Activated CD4-positive, alpha-beta T cell treated with anti-CD3 and anti-CD28 coated beads for 36 hours (primary cell): ENCODE measurements at regions of chr17 and their contacts with region 1.

Region 1: DNA sequence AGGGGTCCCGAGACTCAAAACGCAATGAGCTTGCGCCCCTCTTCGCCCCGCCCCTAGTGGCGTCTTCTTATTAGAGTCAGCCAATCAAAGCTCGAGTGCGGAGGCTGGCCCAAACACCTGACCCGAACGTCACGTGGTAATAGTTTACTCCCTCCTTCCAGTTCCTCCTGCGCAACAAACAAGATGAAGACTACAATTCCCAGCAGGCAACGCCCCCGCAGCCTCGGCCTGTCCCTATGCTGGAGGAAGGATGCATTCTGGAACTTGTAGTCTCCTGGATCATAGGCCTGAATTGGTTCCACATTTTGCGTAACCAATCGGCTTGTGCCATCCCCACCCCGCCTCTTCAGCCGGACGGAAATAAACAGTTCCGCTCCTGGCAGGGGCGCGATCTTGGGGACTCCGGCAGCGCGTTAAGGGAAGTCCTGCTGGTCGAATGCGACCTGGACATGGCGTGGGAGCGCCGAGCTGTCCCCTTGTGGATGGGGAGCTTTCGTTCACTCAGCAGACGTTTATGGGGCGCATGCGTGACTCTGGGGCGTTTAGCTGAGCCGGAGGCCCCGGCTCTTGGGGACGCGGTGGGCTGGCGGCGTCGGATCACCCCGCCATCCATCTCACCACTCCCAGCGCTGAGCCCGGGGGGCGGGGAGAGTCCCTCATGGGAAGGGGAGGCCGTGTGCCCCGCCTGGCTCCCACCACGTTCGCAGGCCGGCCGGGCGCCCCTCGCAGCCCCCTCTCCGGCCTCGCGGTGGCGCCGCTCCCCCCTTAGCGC is at the start of gene WBP2:
- DNase-seq: peak; percentile 99
- ATAC-seq: peak; percentile 95
- H3K4me3 Mint-ChIP-seq: no peak within 1 kb of the TSS
- H3K27ac Mint-ChIP-seq: peak within 1 kb of the TSS; percentile 86
- H3K4me1 Mint-ChIP-seq: peaks cover 37% of the 10 kb centered on the region
- H3K27me3 Mint-ChIP-seq: no peaks in the 10 kb centered on the region
- total RNA-seq, gene WBP2: 68.7 to 74.1 TPM

Region 2: DNA sequence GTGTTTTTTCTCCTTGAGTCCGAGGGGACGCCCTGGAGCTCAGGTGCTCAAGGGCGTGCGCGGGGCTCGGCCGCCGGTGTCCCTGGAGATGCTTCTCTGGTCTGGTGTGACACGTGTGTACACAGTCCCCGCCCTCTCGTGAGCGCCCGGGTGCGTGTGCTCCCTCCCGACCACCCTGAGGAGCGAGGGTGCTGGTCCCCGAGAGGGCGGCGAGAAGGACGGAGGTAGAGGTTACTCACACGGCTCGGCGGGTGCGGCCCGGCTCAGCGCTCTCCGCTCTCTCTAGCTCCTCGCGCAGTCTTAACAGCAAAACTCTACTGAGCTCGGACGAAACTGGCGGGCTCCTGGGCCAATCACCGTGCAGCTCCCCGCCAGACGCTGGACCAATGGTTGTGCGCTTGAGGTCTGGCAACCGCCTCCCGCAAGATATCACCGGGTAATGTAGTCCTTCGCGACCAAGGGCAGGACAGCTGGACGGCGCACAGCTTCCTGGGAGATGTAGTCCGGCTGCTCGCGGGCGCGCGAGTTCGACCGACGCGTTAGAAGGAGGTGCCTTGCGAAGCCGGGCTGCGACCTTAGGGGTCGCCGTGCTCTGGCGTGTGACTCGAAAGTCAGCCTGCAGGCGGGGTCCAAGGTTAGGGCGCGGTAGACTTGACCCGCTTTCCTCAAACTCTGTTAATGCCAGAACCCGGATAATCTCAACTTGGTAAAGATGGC is 566.2 kb before region 1 on chr17 and contains the start of gene SLC25A19:
- CTCF ChIA-PET with region 1: no interaction called
- POLR2A ChIA-PET with region 1: no interaction called
- intact Hi-C with region 1: loop called in 1 of 2 experiments (anchors 1 kb)
- DNase-seq: peak; percentile 99
- ATAC-seq: peak; percentile 95
- H3K4me3 Mint-ChIP-seq: peak within 1 kb of the TSS; percentile 86
- H3K27ac Mint-ChIP-seq: peak within 1 kb of the TSS; percentile 100
- H3K4me1 Mint-ChIP-seq: peaks cover 28% of the 10 kb centered on the region
- H3K27me3 Mint-ChIP-seq: no peaks in the 10 kb centered on the region
- total RNA-seq, gene SLC25A19: 67.8 to 79.7 TPM

Region 3: GRCh38 chr17:75667021-75667790 is 188.3 kb before region 1 on chr17 and contains the starts of genes RECQL5 and SAP30BP:
- CTCF ChIA-PET with region 1: interaction called, 3 read pairs
- POLR2A ChIA-PET with region 1: no interaction called
- intact Hi-C with region 1: loop called in 1 of 2 experiments (anchors 1 kb)
- DNase-seq: peak; percentile 99
- ATAC-seq: peak; percentile 100
- H3K4me3 Mint-ChIP-seq: no peak within 1 kb of the TSS
- H3K27ac Mint-ChIP-seq: no peak within 1 kb of the TSS
- H3K4me1 Mint-ChIP-seq: peaks cover 34% of the 10 kb centered on the region
- H3K27me3 Mint-ChIP-seq: no peaks in the 10 kb centered on the region
- total RNA-seq, gene RECQL5: 36.4 to 40.5 TPM
- total RNA-seq, gene SAP30BP: 87.8 to 100.0 TPM

Region 4: GRCh38 chr17:75827252-75828115 is 28.0 kb before region 1 on chr17:
- CTCF ChIA-PET with region 1: interaction called, 13 read pairs
- POLR2A ChIA-PET with region 1: no interaction called
- intact Hi-C with region 1: loop called in 1 of 2 experiments (anchors 1 kb)
- DNase-seq: peak; percentile 85
- ATAC-seq: peak; percentile 75
- H3K4me3 Mint-ChIP-seq: peak overlapping the region; percentile 53
- H3K27ac Mint-ChIP-seq: peak overlapping the region; percentile 87
- H3K4me1 Mint-ChIP-seq: peaks cover 14% of the 10 kb centered on the region
- H3K27me3 Mint-ChIP-seq: no peaks in the 10 kb centered on the region

Region 5: GRCh38 chr17:75904749-75905521 is 49.4 kb after region 1 on chr17 and contains the start of gene MRPL38:
- CTCF ChIA-PET with region 1: interaction called, 3 read pairs
- POLR2A ChIA-PET with region 1: interaction called, 5 read pairs
- intact Hi-C with region 1: loop called (anchors 1 kb)
- DNase-seq: peak; percentile 97
- ATAC-seq: peak; percentile 99
- H3K4me3 Mint-ChIP-seq: peak within 1 kb of the TSS; percentile 86
- H3K27ac Mint-ChIP-seq: peak within 1 kb of the TSS; percentile 89
- H3K4me1 Mint-ChIP-seq: peaks cover 5% of the 10 kb centered on the region
- H3K27me3 Mint-ChIP-seq: no peaks in the 10 kb centered on the region
- total RNA-seq, gene MRPL38: 98.0 to 115 TPM

Region 6: GRCh38 chr17:76353599-76354316 is 498.3 kb after region 1 on chr17 and contains the start of gene PRPSAP1:
- CTCF ChIA-PET with region 1: no interaction called
- POLR2A ChIA-PET with region 1: no interaction called
- intact Hi-C with region 1: loop called in 1 of 2 experiments (anchors 1 kb)
- DNase-seq: peak; percentile 88
- ATAC-seq: peak; percentile 97
- H3K4me3 Mint-ChIP-seq: peak within 1 kb of the TSS; percentile 78
- H3K27ac Mint-ChIP-seq: peak within 1 kb of the TSS; percentile 96
- H3K4me1 Mint-ChIP-seq: peaks cover 18% of the 10 kb centered on the region
- H3K27me3 Mint-ChIP-seq: no peaks in the 10 kb centered on the region
- total RNA-seq, gene PRPSAP1: 26.7 to 34.9 TPM